Panc1 (cell line): ENCODE measurements at regions of chr6 and their contacts with region 1.

Region 1: DNA sequence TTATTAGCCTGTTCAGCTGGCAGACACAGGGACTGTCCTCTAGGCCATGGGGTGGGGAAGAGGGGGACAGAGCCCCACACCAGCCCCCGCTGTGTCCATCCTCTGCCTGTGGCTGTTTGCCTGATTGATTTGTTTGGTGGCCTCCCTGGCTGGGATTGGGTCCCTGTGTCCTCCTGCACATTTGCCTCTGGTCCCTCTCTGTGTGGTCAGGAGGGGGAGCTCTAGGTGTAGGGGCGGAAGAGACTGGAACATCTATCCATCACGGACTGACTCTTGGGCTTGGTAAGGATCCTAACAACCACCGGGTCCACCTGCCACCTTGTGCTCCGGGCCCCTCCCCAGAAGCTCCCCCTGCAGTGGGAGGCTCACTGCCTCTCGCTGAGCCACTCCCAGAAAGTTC is 38.4 kb upstream of the CCDC167 start:
- DNase-seq: peak; percentile 42
- ATAC-seq: peak; percentile 88
- H3K4me3 ChIP-seq: no peak overlapping the region
- H3K27ac ChIP-seq: peak overlapping the region; percentile 57
- H3K4me1 ChIP-seq: peaks cover 33% of the 10 kb centered on the region
- H3K27me3 ChIP-seq: no peaks in the 10 kb centered on the region
- CTCF ChIP-seq: peak; percentile 88

Region 2: GRCh38 chr6:37691904-37692806 is 154.0 kb after region 1 on chr6:
- CTCF ChIA-PET with region 1: interaction called, 8 read pairs
- POLR2A ChIA-PET with region 1: no interaction called
- in situ Hi-C with region 1: no loop called
- intact Hi-C with region 1: loop called (anchors 1 kb)
- DNase-seq: peak; percentile 45
- ATAC-seq: peak; percentile 85
- H3K4me3 ChIP-seq: no peak overlapping the region
- H3K27ac ChIP-seq: peak overlapping the region; percentile 57
- H3K4me1 ChIP-seq: peaks cover 18% of the 10 kb centered on the region
- H3K27me3 ChIP-seq: no peaks in the 10 kb centered on the region
- CTCF ChIP-seq: peak; percentile 95

Region 3: GRCh38 chr6:37713529-37714119 is 175.5 kb after region 1 on chr6:
- CTCF ChIA-PET with region 1: no interaction called
- POLR2A ChIA-PET with region 1: no interaction called
- in situ Hi-C with region 1: no loop called
- intact Hi-C with region 1: no loop called
- DNase-seq: no peak
- ATAC-seq: no peak
- H3K4me3 ChIP-seq: no peak overlapping the region
- H3K27ac ChIP-seq: no peak overlapping the region
- H3K4me1 ChIP-seq: no peaks in the 10 kb centered on the region
- H3K27me3 ChIP-seq: no peaks in the 10 kb centered on the region
- CTCF ChIP-seq: no peak

Region 4: DNA sequence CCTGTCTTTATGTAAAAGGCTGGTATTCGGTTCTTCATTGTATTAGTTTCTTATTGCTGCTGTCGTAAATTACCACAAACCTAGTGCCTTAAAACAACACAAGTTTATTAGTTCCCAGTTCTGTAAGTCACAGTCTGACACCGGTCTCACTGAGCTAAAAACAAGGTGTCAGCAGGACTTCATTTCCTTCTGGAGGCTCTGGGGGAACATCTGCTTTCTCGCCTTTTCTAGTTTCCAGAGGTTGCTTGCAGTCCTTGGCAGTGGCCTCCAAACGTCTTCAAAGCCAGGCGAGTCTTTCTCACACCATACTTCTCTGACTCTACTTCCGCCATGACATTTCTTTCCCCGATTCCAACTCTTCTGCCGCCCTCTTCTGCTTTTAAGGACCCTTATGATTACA is 238.5 kb after region 1 on chr6:
- CTCF ChIA-PET with region 1: interaction called, 10 read pairs
- POLR2A ChIA-PET with region 1: no interaction called
- in situ Hi-C with region 1: no loop called
- intact Hi-C with region 1: no loop called
- DNase-seq: no peak
- ATAC-seq: no peak
- H3K4me3 ChIP-seq: no peak overlapping the region
- H3K27ac ChIP-seq: no peak overlapping the region
- H3K4me1 ChIP-seq: no peaks in the 10 kb centered on the region
- H3K27me3 ChIP-seq: no peaks in the 10 kb centered on the region
- CTCF ChIP-seq: no peak